Caco-2 (cell line): ENCODE measurements at regions of chr2 and their contacts with region 1.

Region 1: DNA sequence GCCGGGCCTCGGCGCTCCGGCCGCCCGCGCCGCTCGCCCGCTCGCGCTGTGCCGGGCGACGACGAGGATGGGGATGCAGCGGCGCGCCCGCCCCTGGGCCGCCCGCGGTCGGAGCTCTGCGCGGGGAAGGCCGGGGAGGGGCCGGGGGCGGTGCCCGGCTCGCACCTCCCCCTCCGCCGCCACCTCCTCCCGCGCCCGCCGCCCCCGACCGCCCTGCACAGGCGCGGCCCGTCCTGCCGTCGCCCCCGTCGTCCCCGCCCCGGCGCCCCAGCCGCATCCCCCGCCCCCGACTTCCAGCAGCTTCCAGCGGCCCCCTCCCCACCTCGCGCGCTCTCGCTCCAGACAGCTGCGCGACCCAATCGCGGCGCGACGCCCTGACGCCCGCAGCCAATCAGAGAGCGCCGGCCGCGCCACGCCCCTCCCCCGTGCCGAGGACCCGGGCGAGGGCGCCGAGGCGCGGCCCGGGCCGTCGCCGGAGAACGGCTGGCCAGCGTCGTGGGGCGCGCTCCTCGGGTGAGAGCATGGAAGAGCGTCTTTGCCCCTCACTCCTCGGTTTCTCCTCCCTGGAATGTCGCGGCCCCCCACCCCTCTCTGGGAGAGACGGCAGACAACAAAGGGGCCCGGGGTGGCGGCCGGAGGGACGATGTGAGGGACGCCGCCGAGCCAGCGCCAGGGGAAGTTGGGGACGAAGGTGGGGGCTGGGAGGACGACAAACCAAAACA is at the start of gene MBOAT2:
- DNase-seq: peak; percentile 93 to 95
- H3K4me3 ChIP-seq: peak within 1 kb of the TSS; percentile 83
- H3K4me3 Mint-ChIP-seq: peak within 1 kb of the TSS; percentile 84
- H3K27ac Mint-ChIP-seq: peak within 1 kb of the TSS; percentile 90
- H3K4me1 ChIP-seq: peaks cover 8% of the 10 kb centered on the region
- H3K4me1 Mint-ChIP-seq: peaks cover 13% of the 10 kb centered on the region
- H3K27me3 ChIP-seq: no peaks in the 10 kb centered on the region
- H3K27me3 Mint-ChIP-seq: peaks cover 3% of the 10 kb centered on the region
- CTCF ChIP-seq: no peak
- total RNA-seq, gene MBOAT2: 12.6 TPM in 2 replicates

Region 2: GRCh38 chr2:9102855-9103831 is 99.4 kb after region 1 on chr2:
- CTCF ChIA-PET with region 1: no interaction called
- POLR2A ChIA-PET with region 1: interaction called, 6 read pairs
- intact Hi-C with region 1: loop called (anchors 2 kb)
- DNase-seq: peak; percentile 63 to 84
- H3K4me3 ChIP-seq: no peak overlapping the region
- H3K4me3 Mint-ChIP-seq: peak overlapping the region; percentile 61
- H3K27ac Mint-ChIP-seq: peak overlapping the region; percentile 69
- H3K4me1 ChIP-seq: peaks cover 35% of the 10 kb centered on the region
- H3K4me1 Mint-ChIP-seq: peaks cover 34% of the 10 kb centered on the region
- H3K27me3 ChIP-seq: no peaks in the 10 kb centered on the region
- H3K27me3 Mint-ChIP-seq: no peaks in the 10 kb centered on the region
- CTCF ChIP-seq: peak in 1 of 2 experiments; percentile 23